ENCODE measurements at regions of chr18 and their contacts with region 1.

Region 1: GRCh38 chr18:55405893-55406406 is 182.0 kb downstream of the TCF4 start:
- DNase-seq: peak; percentile 52 to 96 (median 84)

Region 2: DNA sequence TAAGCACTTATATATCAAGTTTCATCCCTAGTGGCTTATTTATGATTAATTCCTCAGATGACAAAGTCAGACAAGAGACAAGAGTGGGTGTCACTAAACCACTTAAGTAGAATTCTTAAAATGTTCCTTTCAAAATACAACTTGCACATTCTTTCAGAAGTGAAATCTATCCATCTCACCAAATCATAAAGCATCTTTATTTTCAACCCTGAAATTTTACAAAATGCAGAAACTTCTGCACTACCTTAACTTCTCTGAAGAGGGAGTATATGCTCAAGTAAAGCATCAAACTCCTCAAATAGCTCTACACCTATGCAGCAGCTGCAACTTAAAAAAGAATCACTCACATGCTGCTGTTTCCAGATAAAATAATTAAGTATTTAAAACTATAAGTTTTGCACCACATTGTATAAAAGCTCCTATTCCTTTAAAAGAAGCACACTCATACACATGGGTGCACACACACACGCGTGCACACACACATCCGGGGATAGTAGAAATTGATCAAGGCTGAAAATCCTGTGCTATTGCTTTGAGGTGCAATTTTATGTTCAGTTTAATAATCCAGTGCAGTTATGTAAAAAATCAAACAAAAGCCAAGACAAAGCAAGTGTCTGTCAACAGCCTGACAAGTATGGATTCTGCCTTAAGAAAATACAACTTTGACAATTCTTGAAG is 62.4 kb before region 1 on chr18:
- intact Hi-C with region 1: loop called (anchors 2 kb)
- DNase-seq: peak in 1 of 42 donors; percentile 42